Activated CD4-positive, alpha-beta T cell treated with anti-CD3 and anti-CD28 coated beads, Interleukin-2, amount 10 ng/mL, durations not matched to agents 7 days and 5 days (primary cell): ENCODE measurements at regions of chr17 and their contacts with region 1.

Region 1: GRCh38 chr17:40474419-40475002 is 26.9 kb downstream of the TNS4 start:
- DNase-seq: no peak
- H3K4me3 Mint-ChIP-seq: no peak overlapping the region
- H3K27ac Mint-ChIP-seq: peak overlapping the region; percentile 41
- H3K4me1 Mint-ChIP-seq: peaks cover 44% of the 10 kb centered on the region
- H3K27me3 Mint-ChIP-seq: no peaks in the 10 kb centered on the region

Region 2: DNA sequence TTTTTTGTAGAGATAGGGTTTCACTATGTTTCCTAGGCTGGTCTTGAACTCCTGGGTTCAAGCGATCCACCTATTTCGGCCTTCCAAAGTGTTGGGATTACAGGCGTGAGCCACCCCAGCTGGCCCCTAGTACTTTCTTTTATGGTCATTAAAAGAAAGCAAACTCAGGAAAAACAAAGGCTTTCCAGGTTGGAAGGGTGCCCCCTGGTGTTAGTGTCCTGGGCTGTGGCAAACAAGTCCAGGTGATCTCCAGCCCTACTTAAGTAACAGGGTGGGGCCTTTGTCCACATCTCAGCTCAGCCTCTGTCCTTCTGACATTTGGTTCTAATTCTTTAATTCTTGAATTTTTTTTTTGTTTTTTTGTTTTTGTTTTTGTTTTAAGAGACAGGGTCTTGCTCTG is 24.3 kb before region 1 on chr17:
- CTCF ChIA-PET with region 1: interaction called, 10 read pairs
- POLR2A ChIA-PET with region 1: no interaction called
- DNase-seq: peak; percentile 50
- H3K4me3 Mint-ChIP-seq: no peak overlapping the region
- H3K27ac Mint-ChIP-seq: no peak overlapping the region
- H3K4me1 Mint-ChIP-seq: peaks cover 50% of the 10 kb centered on the region
- H3K27me3 Mint-ChIP-seq: no peaks in the 10 kb centered on the region

Region 3: DNA sequence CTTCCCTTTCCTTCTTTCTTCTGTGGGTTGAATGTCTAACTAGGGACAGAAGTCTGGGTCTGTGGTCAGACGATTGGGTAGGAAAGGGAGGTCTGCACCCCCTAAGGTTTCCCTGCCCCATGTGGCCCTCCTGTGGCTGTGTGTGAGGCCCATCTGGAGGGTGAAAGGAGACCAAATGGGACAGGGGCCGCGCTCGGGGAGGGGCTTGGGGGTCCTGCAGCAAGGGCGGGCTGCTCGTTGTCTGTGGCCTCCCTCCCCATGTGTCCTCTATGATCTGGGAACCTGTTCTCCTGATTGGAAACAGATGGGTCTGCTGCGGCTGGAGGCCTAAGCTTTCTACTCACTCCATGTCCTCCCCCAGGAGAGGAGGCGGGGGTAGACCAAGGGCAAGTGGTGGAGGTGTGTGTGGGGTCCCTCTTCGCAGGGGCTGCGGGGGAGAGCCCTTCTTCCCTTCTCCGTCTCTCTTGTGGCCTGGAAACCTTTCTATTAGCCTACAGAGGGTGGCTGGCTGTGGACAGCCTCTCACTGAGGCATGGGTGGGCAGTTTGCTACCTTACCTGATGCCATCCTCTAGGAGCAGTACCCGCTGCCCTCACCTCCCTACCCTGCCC is 12.7 kb before region 1 on chr17:
- CTCF ChIA-PET with region 1: interaction called, 27 read pairs
- POLR2A ChIA-PET with region 1: no interaction called
- DNase-seq: no peak
- H3K4me3 Mint-ChIP-seq: no peak overlapping the region
- H3K27ac Mint-ChIP-seq: no peak overlapping the region
- H3K4me1 Mint-ChIP-seq: peaks cover 7% of the 10 kb centered on the region
- H3K27me3 Mint-ChIP-seq: peaks cover 9% of the 10 kb centered on the region

Region 4: DNA sequence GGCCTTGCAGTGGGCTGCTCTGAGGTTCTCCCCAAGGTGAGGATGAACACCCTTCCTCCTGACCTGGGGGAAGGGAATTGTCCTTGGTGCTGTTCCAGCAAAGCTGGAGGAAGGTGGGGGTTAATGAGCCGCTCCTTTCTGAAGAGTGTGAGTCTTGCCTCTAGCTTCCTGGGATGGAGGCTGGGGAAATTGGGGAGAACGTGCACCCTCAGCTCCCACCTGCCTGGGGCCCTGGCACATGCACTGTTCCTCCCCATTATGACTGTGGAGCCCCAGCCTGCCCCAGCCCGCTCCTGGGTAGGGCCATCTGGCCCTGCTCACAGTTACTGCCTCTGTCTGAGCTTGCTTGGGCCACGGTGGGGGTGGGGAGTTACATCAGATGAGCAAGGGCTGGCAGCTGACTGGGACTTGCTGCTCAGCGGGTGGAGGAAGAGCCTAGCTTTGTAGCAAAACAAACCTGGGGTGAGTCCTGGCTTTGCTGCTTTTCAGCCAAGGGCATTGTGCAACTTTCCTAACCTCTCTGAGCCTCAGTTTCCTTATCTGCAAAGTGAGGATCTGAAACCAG is 15.9 kb after region 1 on chr17:
- CTCF ChIA-PET with region 1: interaction called, 21 read pairs
- POLR2A ChIA-PET with region 1: no interaction called
- DNase-seq: peak; percentile 48
- H3K4me3 Mint-ChIP-seq: peak overlapping the region; percentile 30
- H3K27ac Mint-ChIP-seq: peak overlapping the region; percentile 84
- H3K4me1 Mint-ChIP-seq: peaks cover 67% of the 10 kb centered on the region
- H3K27me3 Mint-ChIP-seq: no peaks in the 10 kb centered on the region